ENCODE measurements at regions of chr1 and their contacts with region 1.

Region 1: GRCh38 chr1:119711804-119712341 is at the start of gene PHGDH:
- DNase-seq: no peak
- ATAC-seq: peak; percentile 85
- H3K4me3 ChIP-seq: peak within 1 kb of the TSS; percentile 64 to 96
- H3K27ac ChIP-seq: peak within 1 kb of the TSS; percentile 84
- H3K4me1 ChIP-seq: peaks cover 15% of the 10 kb centered on the region
- H3K27me3 ChIP-seq: peaks cover 8% of the 10 kb centered on the region; the same call in 1 of the 2 replicates
- CTCF ChIP-seq: no peak
- total RNA-seq, gene PHGDH: 82.0 TPM

Region 2: DNA sequence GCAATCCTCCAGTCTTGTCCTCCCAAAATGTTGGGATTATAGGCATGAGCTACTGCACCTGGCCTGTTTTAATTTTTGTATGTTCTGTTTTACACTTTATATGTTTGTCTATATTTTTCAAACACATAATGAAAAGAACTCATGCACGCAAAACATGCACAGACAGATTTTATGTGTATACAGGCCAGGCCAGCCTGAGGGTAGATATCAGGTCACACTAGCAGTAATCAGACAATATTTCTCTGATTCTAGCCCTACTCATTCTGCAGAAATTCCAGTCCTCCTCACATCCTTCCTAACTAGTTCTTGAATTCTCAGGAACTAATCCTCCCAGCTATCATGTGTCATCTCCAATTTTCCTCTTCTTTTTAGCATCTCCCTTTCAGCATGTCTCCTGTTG is 28.0 kb before region 1 on chr1:
- CTCF ChIA-PET with region 1: no interaction called
- POLR2A ChIA-PET with region 1: interaction called, 18 read pairs
- in situ Hi-C with region 1: no loop called
- intact Hi-C with region 1: no loop called
- DNase-seq: no peak
- ATAC-seq: no peak
- H3K4me3 ChIP-seq: no peak overlapping the region
- H3K27ac ChIP-seq: no peak overlapping the region
- H3K4me1 ChIP-seq: no peaks in the 10 kb centered on the region
- H3K27me3 ChIP-seq: peaks cover 5% of the 10 kb centered on the region
- CTCF ChIP-seq: no peak